CD8-positive, alpha-beta T cell (primary cell): ENCODE measurements at regions of chr7 and their contacts with region 1.

Region 1: DNA sequence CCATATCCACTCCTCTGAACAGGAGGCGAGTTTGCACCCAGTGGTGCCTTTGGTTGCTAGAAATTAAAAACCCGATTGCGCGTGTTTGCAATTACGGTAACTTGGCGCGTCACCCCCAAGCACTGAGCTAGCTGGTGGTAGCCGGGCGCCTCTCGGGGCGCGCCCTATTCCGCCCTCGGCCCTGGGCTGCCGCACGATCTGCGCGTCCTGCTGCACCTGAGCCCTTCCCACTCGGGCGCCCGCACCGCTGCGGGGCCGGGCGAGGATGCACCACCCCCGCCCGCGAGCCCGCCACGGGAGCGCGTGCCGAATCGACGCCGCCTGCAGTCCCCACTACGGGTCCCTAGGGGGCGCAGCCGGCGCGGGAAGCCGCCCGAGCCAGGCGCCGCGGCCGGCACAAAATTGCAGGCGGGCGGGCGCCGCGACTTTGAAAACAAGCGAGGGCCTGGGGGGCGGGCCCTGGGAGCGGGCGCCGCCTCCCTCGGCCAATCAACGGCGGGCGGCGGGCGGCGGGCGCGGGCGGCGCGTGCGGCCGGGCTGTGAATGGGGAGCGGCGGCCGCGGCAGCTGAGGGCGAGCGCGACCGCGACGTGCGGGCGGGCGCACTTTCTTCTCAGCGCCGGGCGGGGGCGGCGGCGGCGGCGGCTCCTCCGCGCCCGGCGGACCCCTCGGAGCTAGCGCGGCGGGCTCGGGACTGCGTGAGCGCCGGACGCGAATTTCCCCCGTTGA is at the start of gene SDK1:
- DNase-seq: peak; percentile 80 to 96 (median 90)
- ATAC-seq: peak; percentile 82
- H3K4me3 ChIP-seq: peak within 1 kb of the TSS; percentile 33 to 54
- H3K4me3 Mint-ChIP-seq: peak within 1 kb of the TSS; percentile 86
- H3K27ac ChIP-seq: no peak within 1 kb of the TSS
- H3K27ac Mint-ChIP-seq: no peak within 1 kb of the TSS
- H3K4me1 ChIP-seq: peaks cover 17% of the 10 kb centered on the region
- H3K4me1 Mint-ChIP-seq: peaks cover 15% of the 10 kb centered on the region
- H3K27me3 ChIP-seq: peaks cover 3 to 4% of the 10 kb centered on the region in 2 experiments
- H3K27me3 Mint-ChIP-seq: peaks cover 16% of the 10 kb centered on the region
- CTCF ChIP-seq: peak; percentile 79
- total RNA-seq, gene SDK1: 0.24 to 0.36 TPM

Region 2: GRCh38 chr7:2886900-2887299 is 413.9 kb before region 1 on chr7:
- CTCF ChIA-PET with region 1: no interaction called
- POLR2A ChIA-PET with region 1: no interaction called
- intact Hi-C with region 1: loop called in 1 of 2 experiments (anchors 2 kb)
- DNase-seq: peak in 7 of 9 experiments; percentile 14 to 83 (median 64)
- ATAC-seq: peak; percentile 77
- H3K4me3 ChIP-seq: no peak overlapping the region
- H3K4me3 Mint-ChIP-seq: no peak overlapping the region
- H3K27ac ChIP-seq: no peak overlapping the region
- H3K27ac Mint-ChIP-seq: no peak overlapping the region
- H3K4me1 ChIP-seq: no peaks in the 10 kb centered on the region
- H3K4me1 Mint-ChIP-seq: peaks cover 4% of the 10 kb centered on the region
- H3K27me3 ChIP-seq: no peaks in the 10 kb centered on the region
- H3K27me3 Mint-ChIP-seq: no peaks in the 10 kb centered on the region
- CTCF ChIP-seq: peak; percentile 69

Region 3: GRCh38 chr7:3272691-3273181 is 28.1 kb before region 1 on chr7:
- CTCF ChIA-PET with region 1: no interaction called
- POLR2A ChIA-PET with region 1: no interaction called
- intact Hi-C with region 1: no loop called
- DNase-seq: no peak
- ATAC-seq: no peak
- H3K4me3 ChIP-seq: no peak overlapping the region
- H3K4me3 Mint-ChIP-seq: no peak overlapping the region
- H3K27ac ChIP-seq: no peak overlapping the region
- H3K27ac Mint-ChIP-seq: no peak overlapping the region
- H3K4me1 ChIP-seq: no peaks in the 10 kb centered on the region
- H3K4me1 Mint-ChIP-seq: no peaks in the 10 kb centered on the region
- H3K27me3 ChIP-seq: no peaks in the 10 kb centered on the region
- H3K27me3 Mint-ChIP-seq: peaks cover 4% of the 10 kb centered on the region
- CTCF ChIP-seq: no peak

Region 4: DNA sequence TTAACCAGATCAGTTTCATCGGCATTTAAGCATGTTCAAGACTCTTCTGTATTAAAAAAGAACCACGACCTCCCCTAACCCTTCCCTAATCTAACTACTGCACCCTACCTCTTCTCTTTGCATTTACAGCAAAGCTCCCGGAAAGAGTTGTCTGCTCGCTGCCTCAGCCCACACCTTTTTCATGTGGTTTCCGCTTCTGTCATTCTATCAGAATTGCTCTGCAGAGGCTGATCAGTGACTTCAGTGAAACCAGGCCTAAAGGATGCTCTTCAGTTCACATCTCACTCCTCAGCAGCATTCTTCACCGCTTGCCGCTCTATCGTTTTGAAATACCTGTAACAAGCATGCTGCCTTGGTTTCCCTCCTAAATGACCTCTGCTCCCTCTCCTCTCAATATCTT is 161.1 kb after region 1 on chr7:
- CTCF ChIA-PET with region 1: no interaction called
- POLR2A ChIA-PET with region 1: no interaction called
- intact Hi-C with region 1: loop called (anchors 5 kb)
- DNase-seq: peak; percentile 28 to 89 (median 64)
- ATAC-seq: peak; percentile 85
- H3K4me3 ChIP-seq: no peak overlapping the region
- H3K4me3 Mint-ChIP-seq: peak overlapping the region; percentile 74
- H3K27ac ChIP-seq: peak overlapping the region; percentile 2 to 21
- H3K27ac Mint-ChIP-seq: peak overlapping the region; percentile 92
- H3K4me1 ChIP-seq: peaks cover 51% of the 10 kb centered on the region
- H3K4me1 Mint-ChIP-seq: peaks cover 46% of the 10 kb centered on the region
- H3K27me3 ChIP-seq: no peaks in the 10 kb centered on the region
- H3K27me3 Mint-ChIP-seq: no peaks in the 10 kb centered on the region
- CTCF ChIP-seq: no peak

Region 5: DNA sequence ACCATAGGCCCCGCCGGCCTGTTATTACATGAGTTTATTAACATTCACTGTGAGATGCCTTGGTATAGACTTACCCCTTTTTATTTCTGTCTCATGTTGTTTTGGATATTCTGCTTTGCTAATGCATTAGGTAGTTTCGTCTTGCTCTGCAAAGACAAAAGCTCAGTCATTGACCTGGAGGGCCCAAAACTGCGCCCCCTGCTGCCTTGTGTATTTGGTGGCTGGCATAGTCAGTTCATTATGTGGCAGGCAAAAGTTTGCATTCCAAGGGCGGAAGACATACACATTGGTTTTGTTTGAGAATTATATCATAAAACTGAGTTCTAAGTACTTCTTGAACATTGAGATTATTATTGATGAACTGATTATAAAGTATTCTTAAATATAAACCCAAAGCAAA is 372.7 kb after region 1 on chr7:
- CTCF ChIA-PET with region 1: interaction called, 18 read pairs
- POLR2A ChIA-PET with region 1: no interaction called
- intact Hi-C with region 1: loop called (anchors 2 kb)
- DNase-seq: peak in 8 of 9 experiments; percentile 21 to 66 (median 52)
- ATAC-seq: no peak
- H3K4me3 ChIP-seq: no peak overlapping the region
- H3K4me3 Mint-ChIP-seq: no peak overlapping the region
- H3K27ac ChIP-seq: no peak overlapping the region
- H3K27ac Mint-ChIP-seq: no peak overlapping the region
- H3K4me1 ChIP-seq: peaks cover 15% of the 10 kb centered on the region
- H3K4me1 Mint-ChIP-seq: peaks cover 2% of the 10 kb centered on the region
- H3K27me3 ChIP-seq: no peaks in the 10 kb centered on the region
- H3K27me3 Mint-ChIP-seq: peaks cover 4% of the 10 kb centered on the region
- CTCF ChIP-seq: no peak

Region 6: DNA sequence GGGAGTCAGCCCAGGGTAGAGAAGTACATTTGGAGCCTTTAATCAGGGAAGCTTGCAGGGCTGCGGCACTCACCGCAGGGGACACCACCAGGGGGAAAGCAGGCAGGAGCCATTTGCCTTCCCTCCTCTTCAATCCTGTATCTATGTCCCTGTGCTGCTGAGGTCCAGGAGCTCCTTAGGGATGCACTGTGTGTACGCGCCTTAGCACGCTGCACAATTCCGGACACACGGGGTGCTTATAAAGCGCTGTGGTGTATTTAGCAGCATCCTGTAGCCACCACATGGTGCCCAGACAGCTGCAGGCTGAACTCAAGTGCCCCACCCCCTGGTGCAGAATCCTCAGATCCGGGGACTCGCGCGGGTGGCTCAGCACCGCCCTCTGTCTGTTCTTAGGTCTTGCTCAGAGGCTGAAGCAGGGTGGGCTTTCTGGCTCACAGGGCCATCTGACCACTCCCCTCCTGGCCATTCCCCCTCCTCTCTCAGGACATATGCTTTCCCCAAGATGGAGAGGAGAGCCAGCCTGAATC is 421.6 kb after region 1 on chr7:
- CTCF ChIA-PET with region 1: no interaction called
- POLR2A ChIA-PET with region 1: no interaction called
- intact Hi-C with region 1: loop called in 1 of 2 experiments (anchors 5 kb)
- DNase-seq: peak in 7 of 9 experiments; percentile 7 to 62 (median 34)
- ATAC-seq: peak; percentile 52
- H3K4me3 ChIP-seq: no peak overlapping the region
- H3K4me3 Mint-ChIP-seq: no peak overlapping the region
- H3K27ac ChIP-seq: no peak overlapping the region
- H3K27ac Mint-ChIP-seq: no peak overlapping the region
- H3K4me1 ChIP-seq: no peaks in the 10 kb centered on the region
- H3K4me1 Mint-ChIP-seq: no peaks in the 10 kb centered on the region
- H3K27me3 ChIP-seq: no peaks in the 10 kb centered on the region
- H3K27me3 Mint-ChIP-seq: no peaks in the 10 kb centered on the region
- CTCF ChIP-seq: no peak

Region 7: DNA sequence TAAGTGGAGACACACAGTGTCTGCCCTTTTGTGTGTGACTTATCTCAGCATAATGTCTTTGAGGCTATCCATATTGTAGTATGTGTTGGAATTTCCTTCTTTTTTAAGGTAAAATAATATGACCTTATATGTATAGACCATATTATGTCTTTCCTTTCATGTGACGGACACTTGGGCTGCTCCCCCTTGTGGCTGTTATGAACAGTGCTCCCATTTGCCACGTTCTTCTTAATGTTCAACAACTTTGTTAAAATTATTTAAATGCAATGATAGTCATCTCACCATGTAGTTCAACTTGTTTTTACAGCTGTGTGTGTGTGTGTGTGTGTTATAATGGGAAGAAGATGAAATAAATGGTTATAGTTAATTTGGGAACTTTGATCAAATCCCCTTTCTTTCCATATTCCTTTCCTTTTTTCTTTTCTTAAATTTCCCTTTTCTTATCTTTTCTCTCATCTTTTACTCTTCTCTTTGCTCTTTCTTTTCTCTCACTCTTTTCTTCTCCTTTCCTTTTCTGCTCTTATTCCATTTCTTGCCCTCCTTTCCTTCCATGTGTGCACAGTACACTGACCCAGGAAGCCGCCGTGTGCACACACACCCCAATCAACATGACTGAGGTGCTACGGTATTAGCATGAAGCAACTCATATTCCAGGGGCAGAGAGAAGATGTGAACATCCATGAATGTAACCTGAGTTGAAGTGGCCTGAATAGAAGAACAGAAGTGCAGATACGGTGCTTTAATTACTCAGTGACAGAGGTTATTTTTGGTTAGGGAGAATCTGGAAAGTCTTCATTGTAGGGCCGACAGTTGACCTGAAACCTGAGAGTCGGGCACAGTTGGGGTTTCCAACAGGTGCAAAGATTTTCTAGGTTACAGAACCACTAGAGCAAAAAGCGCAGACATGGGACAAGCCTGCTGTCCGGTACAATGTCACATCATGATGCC is 596.9 kb after region 1 on chr7:
- CTCF ChIA-PET with region 1: interaction called, 11 read pairs
- POLR2A ChIA-PET with region 1: no interaction called
- intact Hi-C with region 1: loop called (anchors 1 kb)
- DNase-seq: peak in 7 of 9 experiments; percentile 17 to 71 (median 51)
- ATAC-seq: peak; percentile 54
- H3K4me3 ChIP-seq: no peak overlapping the region
- H3K4me3 Mint-ChIP-seq: no peak overlapping the region
- H3K27ac ChIP-seq: no peak overlapping the region
- H3K27ac Mint-ChIP-seq: no peak overlapping the region
- H3K4me1 ChIP-seq: no peaks in the 10 kb centered on the region
- H3K4me1 Mint-ChIP-seq: no peaks in the 10 kb centered on the region
- H3K27me3 ChIP-seq: peaks cover 0 to 4% of the 10 kb centered on the region in 2 experiments
- H3K27me3 Mint-ChIP-seq: peaks cover 2% of the 10 kb centered on the region
- CTCF ChIP-seq: peak; percentile 92